Prostate gland (tissue), 2 donors: ENCODE measurements at regions of chr19 and their contacts with region 1.

Region 1: GRCh38 chr19:8412783-8413628 is at the start of gene MARCHF2:
- DNase-seq: peak; percentile 95
- H3K4me3 ChIP-seq: peak within 1 kb of the TSS; percentile 81
- H3K27ac ChIP-seq: peak within 1 kb of the TSS; percentile 57
- H3K4me1 ChIP-seq: no peaks in the 10 kb centered on the region
- H3K27me3 ChIP-seq: no peaks in the 10 kb centered on the region
- CTCF ChIP-seq: peak; percentile 65 to 81 (median 76)
- POLR2A ChIP-seq: no peak
- total RNA-seq, gene MARCHF2: 119 to 163 TPM

Region 2: DNA sequence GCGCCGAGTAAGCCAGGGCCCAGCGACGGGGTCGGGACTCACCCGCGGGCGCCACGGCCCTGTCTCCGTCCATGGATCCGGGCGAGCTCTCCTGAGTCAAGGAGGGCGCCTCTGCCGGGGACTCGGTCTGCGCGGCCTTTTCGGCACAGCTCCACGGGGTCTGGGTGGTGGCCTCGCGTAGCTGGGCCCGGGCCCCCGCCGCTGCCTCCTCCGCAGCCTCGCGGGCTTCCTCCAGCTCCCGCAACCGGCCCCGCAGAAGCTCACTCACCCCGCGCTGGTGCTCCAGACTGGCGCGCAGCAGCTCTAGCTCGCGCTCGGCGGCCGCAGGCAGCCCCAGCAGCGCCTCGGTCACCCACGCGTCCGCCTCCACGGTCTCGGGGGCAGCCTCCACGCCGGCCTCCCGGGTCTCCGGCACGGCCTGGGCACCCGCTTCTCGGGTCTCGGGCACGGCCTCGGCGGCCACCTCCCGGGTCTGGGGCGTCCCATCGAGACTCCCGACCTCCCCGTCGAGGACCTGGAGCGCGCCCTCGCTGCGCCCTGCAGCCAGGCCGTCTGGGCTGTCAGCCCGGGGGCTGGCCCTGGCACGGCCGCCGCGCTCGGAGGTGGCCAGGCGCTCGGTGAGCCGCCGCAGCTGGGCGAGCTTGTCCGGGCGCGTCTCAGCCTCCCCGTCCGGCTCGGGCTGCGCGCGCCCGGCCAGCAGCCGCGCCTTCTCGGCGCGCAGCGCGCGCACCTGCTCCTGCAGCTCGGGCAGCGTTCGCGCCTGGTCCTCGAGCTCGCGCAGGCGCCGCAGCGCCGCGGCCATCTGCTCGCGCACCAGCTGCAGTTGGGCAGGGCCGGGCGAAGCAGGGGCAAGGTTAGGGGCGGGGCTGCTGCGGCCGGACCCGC is 78.3 kb before region 1 on chr19:
- intact Hi-C with region 1: no loop called
- DNase-seq: peak; percentile 40
- H3K4me3 ChIP-seq: peak overlapping the region; percentile 21 to 41
- H3K27ac ChIP-seq: peak overlapping the region in 1 of 2 donors; percentile 23
- H3K4me1 ChIP-seq: no peaks in the 10 kb centered on the region
- H3K27me3 ChIP-seq: no peaks in the 10 kb centered on the region
- CTCF ChIP-seq: no peak
- POLR2A ChIP-seq: no peak

Region 3: GRCh38 chr19:8444645-8445487 is 31.9 kb after region 1 on chr19 and contains the start of gene HNRNPM:
- intact Hi-C with region 1: loop called (anchors 2 kb)
- DNase-seq: peak; percentile 100
- H3K4me3 ChIP-seq: peak within 1 kb of the TSS; percentile 84 to 100
- H3K27ac ChIP-seq: peak within 1 kb of the TSS; percentile 95 to 98
- H3K4me1 ChIP-seq: peaks cover 18% of the 10 kb centered on the region
- H3K27me3 ChIP-seq: no peaks in the 10 kb centered on the region
- CTCF ChIP-seq: peak in 1 of 4 experiments; percentile 1
- POLR2A ChIP-seq: peak; percentile 98
- total RNA-seq, gene HNRNPM: 111 to 147 TPM

Region 4: DNA sequence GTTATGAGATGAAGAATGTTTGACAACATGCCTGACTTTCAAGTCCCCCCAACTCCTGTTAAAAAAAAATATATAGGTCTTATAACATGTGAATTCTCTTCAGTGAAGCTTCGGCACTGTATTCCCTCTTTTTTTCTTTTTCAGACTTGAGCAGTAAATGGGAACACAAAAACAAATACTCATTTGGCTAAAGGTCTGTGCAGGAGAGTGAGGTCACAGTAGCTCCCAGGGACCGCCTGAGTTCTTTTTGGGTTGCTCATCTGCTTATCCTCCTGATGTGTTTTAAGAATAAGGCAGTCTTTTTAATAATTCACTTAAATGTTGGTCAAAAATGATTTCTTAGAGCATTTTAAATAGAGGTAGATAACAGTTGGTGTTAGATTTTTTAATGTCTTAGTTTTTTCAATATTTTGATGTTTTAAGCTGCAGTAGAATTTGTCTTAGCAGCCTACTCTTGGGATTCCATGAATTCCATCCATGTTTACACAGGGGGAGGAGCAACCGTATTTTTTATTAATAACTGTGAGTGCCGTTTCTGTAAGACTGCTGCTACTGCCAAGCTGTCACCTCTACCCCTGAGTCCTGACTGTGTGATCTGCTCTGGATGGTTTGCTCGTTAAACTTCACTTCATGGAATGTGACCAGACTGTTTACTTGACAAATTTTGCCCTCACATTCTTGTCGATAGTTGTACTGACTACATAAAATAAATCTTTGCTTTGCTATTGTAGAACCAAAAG is 46.7 kb after region 1 on chr19:
- intact Hi-C with region 1: no loop called
- DNase-seq: no peak
- H3K4me3 ChIP-seq: no peak overlapping the region
- H3K27ac ChIP-seq: peak overlapping the region; percentile 25 to 32
- H3K4me1 ChIP-seq: peaks cover 38% of the 10 kb centered on the region
- H3K27me3 ChIP-seq: no peaks in the 10 kb centered on the region
- CTCF ChIP-seq: no peak
- POLR2A ChIP-seq: no peak

Region 5: GRCh38 chr19:8505680-8506401 is 92.8 kb after region 1 on chr19:
- intact Hi-C with region 1: loop called (anchors 5 kb)
- DNase-seq: peak; percentile 84
- H3K4me3 ChIP-seq: peak overlapping the region; percentile 41 to 42
- H3K27ac ChIP-seq: peak overlapping the region; percentile 53 to 57
- H3K4me1 ChIP-seq: peaks cover 3% of the 10 kb centered on the region
- H3K27me3 ChIP-seq: no peaks in the 10 kb centered on the region
- CTCF ChIP-seq: peak; percentile 85 to 96 (median 90)
- POLR2A ChIP-seq: peak; percentile 16

Region 6: GRCh38 chr19:8578642-8579265 is 165.7 kb after region 1 on chr19:
- intact Hi-C with region 1: loop called (anchors 10 kb)
- DNase-seq: peak; percentile 53
- H3K4me3 ChIP-seq: no peak overlapping the region
- H3K27ac ChIP-seq: no peak overlapping the region
- H3K4me1 ChIP-seq: no peaks in the 10 kb centered on the region
- H3K27me3 ChIP-seq: no peaks in the 10 kb centered on the region
- CTCF ChIP-seq: peak; percentile 70 to 85 (median 80)
- POLR2A ChIP-seq: no peak